ENCODE measurements at regions of chr9 and their contacts with region 1.

Region 1: GRCh38 chr9:133184962-133185361 is 21.2 kb upstream of the GBGT1 start:
- DNase-seq: peak in 6 of 9 experiments; percentile 17 to 80 (median 35)
- ATAC-seq: peak; percentile 49
- H3K4me3 ChIP-seq: no peak overlapping the region
- H3K4me3 Mint-ChIP-seq: no peak overlapping the region
- H3K27ac ChIP-seq: no peak overlapping the region
- H3K27ac Mint-ChIP-seq: no peak overlapping the region
- H3K4me1 ChIP-seq: peaks cover 8% of the 10 kb centered on the region
- H3K4me1 Mint-ChIP-seq: peaks cover 13% of the 10 kb centered on the region
- H3K27me3 ChIP-seq: peaks cover 3% of the 10 kb centered on the region in 2 experiments
- H3K27me3 Mint-ChIP-seq: peaks cover 31% of the 10 kb centered on the region
- CTCF ChIP-seq: peak; percentile 46

Region 2: GRCh38 chr9:133042676-133043075 is 142.3 kb before region 1 on chr9:
- CTCF ChIA-PET with region 1: interaction called, 11 read pairs
- POLR2A ChIA-PET with region 1: no interaction called
- intact Hi-C with region 1: no loop called
- DNase-seq: no peak
- ATAC-seq: no peak
- H3K4me3 ChIP-seq: no peak overlapping the region
- H3K4me3 Mint-ChIP-seq: no peak overlapping the region
- H3K27ac ChIP-seq: no peak overlapping the region
- H3K27ac Mint-ChIP-seq: no peak overlapping the region
- H3K4me1 ChIP-seq: no peaks in the 10 kb centered on the region
- H3K4me1 Mint-ChIP-seq: peaks cover 12% of the 10 kb centered on the region
- H3K27me3 ChIP-seq: no peaks in the 10 kb centered on the region
- H3K27me3 Mint-ChIP-seq: no peaks in the 10 kb centered on the region
- CTCF ChIP-seq: no peak

Region 3: GRCh38 chr9:133170716-133171559 is 14.0 kb before region 1 on chr9:
- CTCF ChIA-PET with region 1: interaction called, 13 read pairs
- POLR2A ChIA-PET with region 1: no interaction called
- intact Hi-C with region 1: no loop called
- DNase-seq: no peak
- ATAC-seq: no peak
- H3K4me3 ChIP-seq: no peak overlapping the region
- H3K4me3 Mint-ChIP-seq: no peak overlapping the region
- H3K27ac ChIP-seq: no peak overlapping the region
- H3K27ac Mint-ChIP-seq: no peak overlapping the region
- H3K4me1 ChIP-seq: no peaks in the 10 kb centered on the region
- H3K4me1 Mint-ChIP-seq: no peaks in the 10 kb centered on the region
- H3K27me3 ChIP-seq: no peaks in the 10 kb centered on the region
- H3K27me3 Mint-ChIP-seq: no peaks in the 10 kb centered on the region
- CTCF ChIP-seq: no peak

Region 4: DNA sequence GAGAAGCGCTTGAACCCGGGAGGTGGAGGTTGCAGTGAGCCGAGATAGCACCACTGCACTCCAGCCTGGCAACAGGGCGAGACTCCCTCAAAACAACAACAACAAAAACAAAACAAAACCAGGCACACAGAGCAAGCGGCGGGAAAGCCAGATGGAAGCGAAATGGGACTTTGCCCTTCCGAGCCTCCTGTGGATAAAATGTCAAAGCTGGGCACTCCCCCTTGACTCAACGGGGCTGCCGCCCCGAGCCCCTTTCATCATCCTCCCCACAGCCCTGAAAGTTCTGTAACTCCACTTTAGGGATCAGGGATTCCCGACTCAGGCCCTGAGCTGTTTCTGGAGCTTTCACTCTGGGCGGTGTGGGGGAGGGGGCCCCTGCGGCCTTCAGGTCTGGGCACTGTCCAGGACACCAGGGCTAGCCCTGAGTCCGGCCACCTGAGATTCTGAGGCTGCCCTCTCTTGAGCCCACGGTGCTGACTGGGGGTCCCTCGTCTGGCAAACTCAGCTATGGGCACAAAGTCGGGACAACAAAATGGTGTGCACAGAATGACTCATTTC is 54.6 kb after region 1 on chr9:
- CTCF ChIA-PET with region 1: no interaction called
- POLR2A ChIA-PET with region 1: no interaction called
- intact Hi-C with region 1: no loop called
- DNase-seq: no peak
- ATAC-seq: no peak
- H3K4me3 ChIP-seq: no peak overlapping the region
- H3K4me3 Mint-ChIP-seq: no peak overlapping the region
- H3K27ac ChIP-seq: no peak overlapping the region
- H3K27ac Mint-ChIP-seq: no peak overlapping the region
- H3K4me1 ChIP-seq: peaks cover 17% of the 10 kb centered on the region
- H3K4me1 Mint-ChIP-seq: peaks cover 10% of the 10 kb centered on the region
- H3K27me3 ChIP-seq: peaks cover 0 to 7% of the 10 kb centered on the region in 2 experiments
- H3K27me3 Mint-ChIP-seq: peaks cover 13% of the 10 kb centered on the region
- CTCF ChIP-seq: no peak

Region 5: DNA sequence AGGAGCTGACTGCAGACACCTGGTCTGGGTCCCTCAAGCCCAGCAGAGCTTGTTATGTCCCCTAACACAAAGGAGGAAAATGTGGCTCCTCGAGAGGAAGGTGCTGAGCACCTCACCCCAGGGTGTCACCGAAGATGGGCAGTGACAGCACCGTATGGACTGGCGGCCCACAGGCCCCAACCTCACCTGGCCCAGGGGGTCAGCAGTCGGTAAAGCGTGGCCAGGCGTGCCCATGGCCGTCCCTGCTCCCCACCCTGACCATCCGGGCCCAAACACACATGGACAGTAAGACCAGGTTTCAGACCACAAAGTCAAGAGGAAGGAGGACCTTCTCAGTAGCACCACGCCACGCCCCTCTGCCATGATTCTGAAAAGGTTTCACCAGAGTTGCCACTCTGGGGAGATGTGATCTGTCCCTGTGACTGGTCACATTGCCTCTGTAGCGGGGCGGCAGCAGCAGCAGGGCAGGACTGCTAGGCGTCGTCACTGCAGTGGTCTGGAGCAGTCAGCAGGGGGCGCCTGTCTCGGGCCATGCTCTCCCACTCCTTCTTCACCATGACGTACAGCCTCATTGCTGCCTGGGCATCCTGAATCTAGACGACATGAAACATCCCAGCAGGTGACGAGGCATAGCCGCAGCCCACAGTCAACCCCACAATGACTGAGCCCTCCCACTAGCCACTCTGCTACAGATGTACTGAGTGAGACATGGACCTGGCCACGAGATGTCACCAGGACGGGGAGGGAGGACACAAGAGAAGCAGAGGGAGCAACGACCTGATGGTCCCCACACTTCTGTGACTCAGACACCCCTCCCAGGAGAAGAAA is 221.7 kb after region 1 on chr9:
- CTCF ChIA-PET with region 1: interaction called, 16 read pairs
- POLR2A ChIA-PET with region 1: no interaction called
- intact Hi-C with region 1: loop called in 1 of 2 experiments (anchors 1 kb)
- DNase-seq: peak; percentile 62 to 87 (median 83)
- ATAC-seq: peak; percentile 91
- H3K4me3 ChIP-seq: no peak overlapping the region
- H3K4me3 Mint-ChIP-seq: no peak overlapping the region
- H3K27ac ChIP-seq: peak overlapping the region in 1 of 2 experiments; percentile 58
- H3K27ac Mint-ChIP-seq: peak overlapping the region; percentile 64
- H3K4me1 ChIP-seq: peaks cover 3% of the 10 kb centered on the region
- H3K4me1 Mint-ChIP-seq: peaks cover 11% of the 10 kb centered on the region
- H3K27me3 ChIP-seq: no peaks in the 10 kb centered on the region
- H3K27me3 Mint-ChIP-seq: no peaks in the 10 kb centered on the region
- CTCF ChIP-seq: peak; percentile 89

Region 6: DNA sequence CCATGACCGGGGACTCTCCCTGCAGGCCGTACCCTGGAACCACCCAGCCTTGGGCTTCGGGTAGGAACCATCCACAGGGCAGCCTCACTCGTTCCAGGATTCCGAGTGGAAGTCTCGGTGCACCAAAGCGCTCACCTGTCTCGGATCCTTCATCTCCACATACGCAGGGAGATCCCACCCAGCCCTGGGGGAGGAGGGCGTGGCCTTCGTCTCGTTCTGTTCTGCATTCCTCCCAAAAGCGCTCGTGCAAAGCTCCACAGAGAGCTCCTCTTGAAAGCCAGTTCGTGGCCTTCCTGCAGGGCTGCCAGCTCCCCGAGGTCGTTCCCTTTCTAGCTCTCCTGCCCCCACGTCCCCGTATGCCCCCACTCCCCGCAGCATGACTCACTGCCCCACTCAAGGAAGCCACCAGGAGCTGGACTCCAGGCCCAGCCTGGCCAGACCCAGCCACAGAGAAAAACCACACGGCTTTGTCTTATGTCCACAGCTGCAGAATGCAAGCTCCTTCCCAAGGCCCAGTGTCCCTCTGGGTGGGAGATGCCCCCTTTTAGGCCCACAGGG is 618.1 kb after region 1 on chr9:
- CTCF ChIA-PET with region 1: no interaction called
- POLR2A ChIA-PET with region 1: no interaction called
- intact Hi-C with region 1: no loop called
- DNase-seq: no peak
- ATAC-seq: no peak
- H3K4me3 ChIP-seq: no peak overlapping the region
- H3K4me3 Mint-ChIP-seq: no peak overlapping the region
- H3K27ac ChIP-seq: no peak overlapping the region
- H3K27ac Mint-ChIP-seq: no peak overlapping the region
- H3K4me1 ChIP-seq: no peaks in the 10 kb centered on the region
- H3K4me1 Mint-ChIP-seq: no peaks in the 10 kb centered on the region
- H3K27me3 ChIP-seq: no peaks in the 10 kb centered on the region
- H3K27me3 Mint-ChIP-seq: no peaks in the 10 kb centered on the region
- CTCF ChIP-seq: no peak